ENCODE measurements at regions of chr7 and their contacts with region 1.

Region 1: DNA sequence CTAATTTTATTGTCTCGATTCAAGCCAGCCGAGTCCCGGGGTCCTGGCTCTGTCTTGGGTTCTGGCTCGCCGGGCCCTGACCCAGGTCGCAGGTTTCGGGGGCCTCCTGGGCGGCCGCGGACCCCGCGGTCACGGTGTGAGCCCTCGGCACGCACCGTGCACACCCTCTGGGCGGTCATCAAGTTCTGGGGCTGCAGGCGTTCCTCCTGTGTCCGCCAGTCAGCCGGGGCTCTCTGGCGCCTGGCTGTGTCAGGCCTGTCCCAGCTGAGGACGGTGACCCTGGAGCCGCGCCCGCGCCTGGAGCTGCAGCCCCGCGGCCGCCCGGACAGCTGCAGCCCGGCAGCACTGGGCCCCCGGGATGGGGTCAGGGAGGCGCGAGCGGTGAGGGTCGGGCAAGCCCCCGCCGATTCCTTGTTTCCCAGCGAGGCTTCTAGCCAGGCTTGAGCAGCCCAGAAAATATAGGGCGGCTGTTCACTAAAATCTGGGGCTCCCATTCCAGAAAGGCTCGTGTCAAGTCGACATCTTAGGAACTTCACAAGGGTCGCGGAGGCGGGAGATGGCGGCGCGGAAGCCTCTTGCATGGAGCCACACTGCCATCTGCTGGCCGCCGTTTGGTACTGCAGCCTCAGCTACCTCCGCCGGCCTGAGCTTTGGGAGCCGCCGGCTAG is 4.2 kb upstream of the HOXA7 start:
- DNase-seq: peak; percentile 87
- ATAC-seq: peak; percentile 19
- H3K4me3 ChIP-seq: peak overlapping the region; percentile 84
- H3K27ac ChIP-seq: peak overlapping the region; percentile 97
- H3K4me1 ChIP-seq: peaks cover 15% of the 10 kb centered on the region
- H3K27me3 ChIP-seq: no peaks in the 10 kb centered on the region
- CTCF ChIP-seq: peak; percentile 96

Region 2: DNA sequence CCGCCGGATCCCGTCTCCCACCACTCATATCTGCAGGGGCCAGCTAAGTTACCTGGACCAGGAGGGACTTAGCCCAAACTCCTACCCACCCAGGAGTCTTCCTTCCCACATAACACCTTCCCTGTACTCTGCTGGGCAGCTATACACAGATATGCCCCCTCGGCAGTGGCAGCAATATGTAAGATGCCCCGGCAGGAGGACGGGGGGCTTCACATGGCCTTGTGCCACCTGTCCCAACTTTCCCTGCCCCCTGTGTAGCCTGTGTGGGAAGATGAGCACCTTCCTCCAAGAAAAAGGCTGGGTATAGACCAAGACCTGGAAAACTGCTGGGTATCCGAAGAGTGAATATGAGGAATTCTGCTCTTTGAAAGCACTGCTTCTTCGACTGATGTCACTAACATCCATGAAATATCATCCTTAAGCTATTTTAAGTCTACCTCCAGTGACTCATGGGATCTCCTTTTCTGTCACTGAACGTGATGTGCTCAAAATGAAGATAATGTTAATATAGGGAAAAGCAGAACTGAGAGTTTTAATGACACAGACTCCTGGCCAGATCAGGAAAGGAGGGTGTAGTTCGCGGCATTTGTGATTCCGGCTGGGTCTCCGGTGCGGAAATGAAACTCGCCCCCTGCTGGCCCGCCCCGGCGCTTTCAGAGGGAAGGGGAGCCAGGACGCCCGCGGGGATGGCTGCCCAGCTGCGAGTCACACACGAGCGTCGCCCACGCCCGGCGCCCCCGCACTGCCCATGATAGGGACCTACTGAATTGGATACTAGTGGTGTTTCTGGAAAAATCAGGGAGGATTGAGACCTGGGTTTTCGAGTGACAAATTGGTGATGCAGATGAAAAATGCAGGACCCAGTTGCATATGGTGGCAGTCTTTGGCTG is 1265.5 kb before region 1 on chr7:
- CTCF ChIA-PET with region 1: no interaction called
- POLR2A ChIA-PET with region 1: no interaction called
- intact Hi-C with region 1: loop called (anchors 5 kb)
- DNase-seq: peak; percentile 52
- ATAC-seq: peak; percentile 47
- H3K4me3 ChIP-seq: peak overlapping the region; percentile 12; the same call in 1 of the 2 replicates
- H3K27ac ChIP-seq: no peak overlapping the region
- H3K4me1 ChIP-seq: peaks cover 5% of the 10 kb centered on the region; the same call in 1 of the 2 replicates
- H3K27me3 ChIP-seq: no peaks in the 10 kb centered on the region
- CTCF ChIP-seq: peak; percentile 74

Region 3: GRCh38 chr7:26200444-26201246 is 960.0 kb before region 1 on chr7 and contains the start of gene HNRNPA2B1:
- CTCF ChIA-PET with region 1: no interaction called
- POLR2A ChIA-PET with region 1: no interaction called
- intact Hi-C with region 1: loop called (anchors 5 kb)
- DNase-seq: peak; percentile 98
- ATAC-seq: peak; percentile 80
- H3K4me3 ChIP-seq: peak within 1 kb of the TSS; percentile 99
- H3K27ac ChIP-seq: peak within 1 kb of the TSS; percentile 95
- H3K4me1 ChIP-seq: peaks cover 35% of the 10 kb centered on the region
- H3K27me3 ChIP-seq: no peaks in the 10 kb centered on the region
- CTCF ChIP-seq: no peak
- total RNA-seq, gene HNRNPA2B1: 304 and 457 TPM in 2 replicates

Region 4: DNA sequence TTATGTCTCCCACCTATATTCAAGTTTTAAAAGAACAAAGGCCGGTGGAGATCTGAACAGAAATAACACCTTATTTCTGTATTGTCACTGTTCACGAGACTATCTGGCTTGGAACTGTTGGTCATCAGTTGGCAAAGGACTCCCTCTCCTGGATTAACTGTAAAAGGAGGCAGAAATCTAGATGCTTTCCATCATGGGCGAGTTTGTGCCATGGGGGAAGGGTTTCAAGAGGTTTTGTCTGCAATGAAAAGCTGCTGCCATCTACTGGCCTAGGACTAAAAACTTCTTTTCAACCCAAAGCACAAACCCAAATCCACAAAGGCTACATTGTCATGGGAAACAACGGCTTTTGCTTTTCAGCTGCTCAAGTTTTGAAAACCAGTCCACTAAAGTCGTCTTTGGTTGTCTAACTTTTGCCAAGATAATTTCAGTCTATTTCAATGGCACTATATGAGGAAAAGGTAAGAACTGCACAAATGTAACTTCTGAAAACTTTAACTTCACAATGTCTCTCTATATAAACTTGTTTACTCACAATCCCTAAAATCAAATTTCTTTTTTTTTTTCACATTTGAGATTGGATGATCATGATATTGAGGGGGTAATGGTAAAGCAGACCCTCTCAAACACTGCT is 493.1 kb before region 1 on chr7:
- CTCF ChIA-PET with region 1: interaction called, 17 read pairs
- POLR2A ChIA-PET with region 1: no interaction called
- intact Hi-C with region 1: loop called (anchors 5 kb)
- DNase-seq: peak; percentile 94
- ATAC-seq: peak; percentile 93
- H3K4me3 ChIP-seq: no peak overlapping the region
- H3K27ac ChIP-seq: no peak overlapping the region
- H3K4me1 ChIP-seq: peaks cover 24% of the 10 kb centered on the region
- H3K27me3 ChIP-seq: no peaks in the 10 kb centered on the region
- CTCF ChIP-seq: peak; percentile 97

Region 5: DNA sequence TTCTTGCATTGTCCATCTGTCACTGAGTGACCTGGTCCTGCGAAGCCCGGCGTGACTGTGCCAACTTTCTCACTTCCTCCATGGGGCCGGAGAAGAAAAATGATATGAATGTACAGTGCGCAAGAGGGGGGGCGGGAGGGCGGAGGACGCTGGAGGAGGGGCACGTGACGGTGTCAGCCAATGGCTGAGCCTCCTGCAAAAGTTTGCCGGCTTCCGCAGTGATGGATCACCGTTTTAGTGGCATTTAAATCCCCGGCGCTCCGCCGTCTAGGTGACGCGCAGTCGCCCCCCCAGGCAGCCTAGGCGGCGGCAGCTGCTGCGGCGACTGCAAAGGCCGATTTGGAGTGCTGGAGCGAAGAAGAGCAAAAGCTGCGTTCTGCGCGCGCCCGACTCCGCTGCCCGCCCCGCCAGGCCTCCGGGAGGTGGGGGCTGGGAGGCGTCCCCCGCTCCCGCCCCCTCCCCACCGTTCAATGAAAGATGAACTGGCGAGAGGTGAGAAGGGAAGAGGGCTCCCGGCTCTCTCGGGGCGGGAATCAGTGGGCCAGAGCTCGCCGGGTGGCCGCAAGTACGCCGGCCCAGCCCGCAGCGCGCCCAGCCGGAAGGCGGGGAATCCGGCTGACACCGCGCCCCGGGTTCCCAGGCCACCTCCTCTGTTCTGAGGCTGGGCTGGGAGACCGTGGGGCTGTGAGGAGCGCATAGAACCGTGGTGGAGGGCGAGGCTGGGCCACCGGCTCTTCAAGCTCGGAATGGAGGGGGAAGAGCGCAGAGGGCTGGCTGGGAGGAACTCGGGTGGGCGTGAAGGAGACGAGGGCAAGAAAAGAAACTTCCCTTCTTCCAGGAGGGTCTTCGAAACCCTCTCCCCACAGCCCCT is 64.5 kb before region 1 on chr7 and contains the start of gene HOXA1:
- CTCF ChIA-PET with region 1: no interaction called
- POLR2A ChIA-PET with region 1: interaction called, 5 read pairs
- intact Hi-C with region 1: loop called (anchors 2 kb)
- DNase-seq: peak; percentile 94
- ATAC-seq: peak; percentile 65
- H3K4me3 ChIP-seq: peak within 1 kb of the TSS; percentile 84
- H3K27ac ChIP-seq: peak within 1 kb of the TSS; percentile 88
- H3K4me1 ChIP-seq: peaks cover 35% of the 10 kb centered on the region
- H3K27me3 ChIP-seq: no peaks in the 10 kb centered on the region
- CTCF ChIP-seq: no peak
- total RNA-seq, gene HOXA1: 1.4 and 2.0 TPM in 2 replicates

Region 6: GRCh38 chr7:27196287-27196767 is 35.6 kb after region 1 on chr7:
- CTCF ChIA-PET with region 1: no interaction called
- POLR2A ChIA-PET with region 1: interaction called, 3 read pairs
- intact Hi-C with region 1: loop called (anchors 5 kb)
- DNase-seq: peak; percentile 89
- ATAC-seq: no peak
- H3K4me3 ChIP-seq: peak overlapping the region; percentile 91
- H3K27ac ChIP-seq: peak overlapping the region; percentile 21; the same call in 1 of the 2 replicates
- H3K4me1 ChIP-seq: peaks cover 14% of the 10 kb centered on the region
- H3K27me3 ChIP-seq: no peaks in the 10 kb centered on the region
- CTCF ChIP-seq: peak; percentile 91

Region 7: GRCh38 chr7:27210441-27211083 is 49.9 kb after region 1 on chr7:
- CTCF ChIA-PET with region 1: no interaction called
- POLR2A ChIA-PET with region 1: no interaction called
- intact Hi-C with region 1: no loop called
- DNase-seq: peak; percentile 65
- ATAC-seq: peak; percentile 46
- H3K4me3 ChIP-seq: peak overlapping the region; percentile 65
- H3K27ac ChIP-seq: no peak overlapping the region
- H3K4me1 ChIP-seq: peaks cover 36% of the 10 kb centered on the region
- H3K27me3 ChIP-seq: no peaks in the 10 kb centered on the region
- CTCF ChIP-seq: peak; percentile 83

Region 8: GRCh38 chr7:27409776-27410175 is 249.1 kb after region 1 on chr7:
- CTCF ChIA-PET with region 1: no interaction called
- POLR2A ChIA-PET with region 1: no interaction called
- intact Hi-C with region 1: no loop called
- DNase-seq: peak; percentile 55
- ATAC-seq: peak; percentile 87
- H3K4me3 ChIP-seq: no peak overlapping the region
- H3K27ac ChIP-seq: 0 out of 2 replicates have a peak overlapping the region, but pooled peaks have one; percentile 11
- H3K4me1 ChIP-seq: peaks cover 12% of the 10 kb centered on the region
- H3K27me3 ChIP-seq: no peaks in the 10 kb centered on the region
- CTCF ChIP-seq: no peak